Caco-2 (cell line): ENCODE measurements at regions of chr20 and their contacts with region 1.

Region 1: DNA sequence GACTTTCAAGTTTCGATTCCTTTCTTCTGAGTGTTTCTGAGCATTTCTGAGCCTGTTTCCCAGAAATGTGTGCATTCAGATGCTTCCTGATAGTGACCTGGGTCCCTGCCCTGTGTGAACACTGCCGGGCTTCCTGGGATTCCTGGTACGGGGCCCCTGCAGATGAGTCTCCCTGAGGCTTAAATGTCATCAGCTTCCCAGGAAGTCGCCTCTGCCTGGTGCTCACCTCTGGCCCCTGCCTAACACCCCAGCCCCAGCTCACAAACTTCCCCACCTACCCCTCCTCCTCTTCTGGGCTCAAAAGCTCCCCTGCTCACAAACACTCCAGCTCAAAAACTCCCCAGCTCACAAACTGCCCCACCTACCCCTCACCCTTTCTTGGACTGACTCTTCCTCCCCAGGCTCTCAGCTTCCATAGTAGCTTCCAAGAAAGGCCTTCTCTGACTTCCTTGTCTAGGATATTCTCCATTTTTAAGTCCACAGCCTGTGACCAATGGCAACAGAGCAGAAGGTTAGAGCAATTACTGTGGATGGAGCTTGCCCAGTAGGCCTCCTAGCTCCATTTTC is 42.0 kb downstream of the TGM2 start:
- DNase-seq: peak; percentile 96 to 98
- H3K4me3 ChIP-seq: no peak overlapping the region
- H3K4me3 Mint-ChIP-seq: peak overlapping the region; percentile 50
- H3K27ac Mint-ChIP-seq: peak overlapping the region; percentile 99
- H3K4me1 ChIP-seq: peaks cover 34% of the 10 kb centered on the region
- H3K4me1 Mint-ChIP-seq: peaks cover 42% of the 10 kb centered on the region
- H3K27me3 ChIP-seq: no peaks in the 10 kb centered on the region
- H3K27me3 Mint-ChIP-seq: no peaks in the 10 kb centered on the region
- CTCF ChIP-seq: no peak

Region 2: GRCh38 chr20:37711987-37712964 is 410.8 kb before region 1 on chr20:
- CTCF ChIA-PET with region 1: no interaction called
- POLR2A ChIA-PET with region 1: no interaction called
- intact Hi-C with region 1: no loop called
- DNase-seq: no peak
- H3K4me3 ChIP-seq: no peak overlapping the region
- H3K4me3 Mint-ChIP-seq: no peak overlapping the region
- H3K27ac Mint-ChIP-seq: peak overlapping the region; percentile 69
- H3K4me1 ChIP-seq: peaks cover 43% of the 10 kb centered on the region
- H3K4me1 Mint-ChIP-seq: peaks cover 37% of the 10 kb centered on the region
- H3K27me3 ChIP-seq: no peaks in the 10 kb centered on the region
- H3K27me3 Mint-ChIP-seq: no peaks in the 10 kb centered on the region
- CTCF ChIP-seq: no peak

Region 3: DNA sequence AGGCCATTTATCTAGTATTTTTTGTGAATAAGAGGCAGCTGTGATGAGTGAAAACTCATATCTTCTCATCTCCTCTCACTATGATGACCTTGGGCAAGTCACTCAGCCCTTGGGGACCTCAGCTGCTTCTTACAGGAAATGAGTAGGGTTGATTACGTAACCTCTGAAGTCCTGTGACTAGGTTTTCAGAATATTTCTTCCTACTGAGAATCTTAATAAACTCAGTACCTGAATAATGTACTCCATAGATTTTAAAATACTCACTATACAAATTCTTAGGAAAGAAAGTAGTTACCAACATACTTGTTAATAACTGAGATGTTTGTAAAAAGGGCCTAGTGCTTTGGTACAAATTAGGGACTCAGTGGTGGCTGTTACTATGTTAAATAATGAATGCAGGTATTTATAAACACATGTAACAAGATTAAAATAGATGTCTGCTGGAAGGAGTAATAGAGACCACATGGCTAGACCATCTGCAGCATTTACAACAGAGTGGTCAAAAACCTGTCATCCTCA is 28.7 kb before region 1 on chr20:
- CTCF ChIA-PET with region 1: no interaction called
- POLR2A ChIA-PET with region 1: interaction called, 3 read pairs
- intact Hi-C with region 1: loop called (anchors 1 kb)
- DNase-seq: no peak
- H3K4me3 ChIP-seq: no peak overlapping the region
- H3K4me3 Mint-ChIP-seq: no peak overlapping the region
- H3K27ac Mint-ChIP-seq: peak overlapping the region; percentile 20
- H3K4me1 ChIP-seq: peaks cover 8% of the 10 kb centered on the region; the same call in 1 of the 2 replicates
- H3K4me1 Mint-ChIP-seq: peaks cover 8% of the 10 kb centered on the region
- H3K27me3 ChIP-seq: no peaks in the 10 kb centered on the region
- H3K27me3 Mint-ChIP-seq: no peaks in the 10 kb centered on the region
- CTCF ChIP-seq: no peak

Region 4: GRCh38 chr20:38143646-38144554 is 20.8 kb after region 1 on chr20:
- CTCF ChIA-PET with region 1: interaction called, 10 read pairs
- POLR2A ChIA-PET with region 1: interaction called, 23 read pairs
- intact Hi-C with region 1: loop called (anchors 1 kb)
- DNase-seq: peak; percentile 89 to 97
- H3K4me3 ChIP-seq: no peak overlapping the region
- H3K4me3 Mint-ChIP-seq: peak overlapping the region; percentile 56
- H3K27ac Mint-ChIP-seq: peak overlapping the region; percentile 96
- H3K4me1 ChIP-seq: peaks cover 66% of the 10 kb centered on the region
- H3K4me1 Mint-ChIP-seq: peaks cover 48% of the 10 kb centered on the region
- H3K27me3 ChIP-seq: no peaks in the 10 kb centered on the region
- H3K27me3 Mint-ChIP-seq: no peaks in the 10 kb centered on the region
- CTCF ChIP-seq: no peak

Region 5: DNA sequence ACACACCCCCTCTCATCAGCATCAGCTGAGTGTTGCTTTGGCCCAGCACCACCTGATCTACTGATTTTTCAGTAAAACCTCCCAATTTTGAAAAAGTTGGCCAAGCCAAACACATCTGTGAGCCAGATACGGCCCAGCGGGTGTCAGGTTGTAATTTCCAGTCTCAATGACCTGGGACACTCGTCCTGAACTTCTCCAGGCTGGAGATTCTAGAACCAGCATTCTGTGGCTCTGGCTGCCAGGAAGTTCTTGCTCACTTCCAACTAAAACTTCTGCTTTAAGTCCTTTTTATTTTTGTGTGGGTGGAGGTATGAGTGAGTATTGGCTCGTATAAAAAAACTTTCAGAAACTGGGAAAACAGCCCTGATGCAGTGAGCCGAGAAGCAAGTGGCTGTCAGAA is 132.3 kb after region 1 on chr20:
- CTCF ChIA-PET with region 1: no interaction called
- POLR2A ChIA-PET with region 1: no interaction called
- intact Hi-C with region 1: no loop called
- DNase-seq: no peak
- H3K4me3 ChIP-seq: no peak overlapping the region
- H3K4me3 Mint-ChIP-seq: no peak overlapping the region
- H3K27ac Mint-ChIP-seq: no peak overlapping the region
- H3K4me1 ChIP-seq: peaks cover 7% of the 10 kb centered on the region
- H3K4me1 Mint-ChIP-seq: peaks cover 7% of the 10 kb centered on the region
- H3K27me3 ChIP-seq: no peaks in the 10 kb centered on the region; the same call in 1 of the 2 replicates
- H3K27me3 Mint-ChIP-seq: peaks cover 3% of the 10 kb centered on the region
- CTCF ChIP-seq: no peak

Region 6: GRCh38 chr20:38387953-38388352 is 264.8 kb after region 1 on chr20:
- CTCF ChIA-PET with region 1: no interaction called
- POLR2A ChIA-PET with region 1: no interaction called
- intact Hi-C with region 1: no loop called
- DNase-seq: peak in 1 of 2 experiments; percentile 20
- H3K4me3 ChIP-seq: no peak overlapping the region
- H3K4me3 Mint-ChIP-seq: no peak overlapping the region
- H3K27ac Mint-ChIP-seq: no peak overlapping the region
- H3K4me1 ChIP-seq: no peaks in the 10 kb centered on the region
- H3K4me1 Mint-ChIP-seq: no peaks in the 10 kb centered on the region
- H3K27me3 ChIP-seq: peaks cover 2% of the 10 kb centered on the region; the same call in 1 of the 2 replicates
- H3K27me3 Mint-ChIP-seq: no peaks in the 10 kb centered on the region
- CTCF ChIP-seq: peak in 1 of 2 experiments; percentile 30